ENCODE measurements at regions of chr9 and their contacts with region 1.

Region 1: DNA sequence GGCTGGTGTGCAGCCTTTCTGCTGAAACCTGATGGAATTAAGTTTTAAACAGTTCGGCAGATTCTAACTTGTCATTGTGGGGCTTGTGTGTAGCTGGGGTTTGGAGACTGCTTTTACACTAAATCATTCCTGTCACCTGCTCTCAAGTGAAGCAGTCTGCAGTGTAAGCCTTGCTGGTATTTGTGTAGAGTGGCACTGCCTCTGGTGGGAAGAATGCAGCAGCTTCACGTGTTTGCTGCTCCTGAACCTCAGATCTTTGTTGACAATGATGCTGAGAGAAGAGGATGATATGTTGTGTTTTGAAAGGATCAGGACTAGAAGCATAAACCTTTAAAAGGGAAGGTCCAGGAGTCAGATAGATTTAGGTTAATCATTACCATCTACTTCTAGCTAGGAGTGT is 88.1 kb downstream of the KDM4C start:
- DNase-seq: no peak
- ATAC-seq: peak in 6 of 8 donors; percentile 50 to 74 (median 61)
- H3K4me3 ChIP-seq: no peak overlapping the region
- H3K27ac ChIP-seq: no peak overlapping the region
- H3K4me1 ChIP-seq: peaks cover 0 to 7% (median 0%) of the 10 kb centered on the region in 9 donors
- H3K27me3 ChIP-seq: no peaks in the 10 kb centered on the region
- CTCF ChIP-seq: peak in 7 of 9 donors; percentile 28 to 60 (median 41)

Region 2: DNA sequence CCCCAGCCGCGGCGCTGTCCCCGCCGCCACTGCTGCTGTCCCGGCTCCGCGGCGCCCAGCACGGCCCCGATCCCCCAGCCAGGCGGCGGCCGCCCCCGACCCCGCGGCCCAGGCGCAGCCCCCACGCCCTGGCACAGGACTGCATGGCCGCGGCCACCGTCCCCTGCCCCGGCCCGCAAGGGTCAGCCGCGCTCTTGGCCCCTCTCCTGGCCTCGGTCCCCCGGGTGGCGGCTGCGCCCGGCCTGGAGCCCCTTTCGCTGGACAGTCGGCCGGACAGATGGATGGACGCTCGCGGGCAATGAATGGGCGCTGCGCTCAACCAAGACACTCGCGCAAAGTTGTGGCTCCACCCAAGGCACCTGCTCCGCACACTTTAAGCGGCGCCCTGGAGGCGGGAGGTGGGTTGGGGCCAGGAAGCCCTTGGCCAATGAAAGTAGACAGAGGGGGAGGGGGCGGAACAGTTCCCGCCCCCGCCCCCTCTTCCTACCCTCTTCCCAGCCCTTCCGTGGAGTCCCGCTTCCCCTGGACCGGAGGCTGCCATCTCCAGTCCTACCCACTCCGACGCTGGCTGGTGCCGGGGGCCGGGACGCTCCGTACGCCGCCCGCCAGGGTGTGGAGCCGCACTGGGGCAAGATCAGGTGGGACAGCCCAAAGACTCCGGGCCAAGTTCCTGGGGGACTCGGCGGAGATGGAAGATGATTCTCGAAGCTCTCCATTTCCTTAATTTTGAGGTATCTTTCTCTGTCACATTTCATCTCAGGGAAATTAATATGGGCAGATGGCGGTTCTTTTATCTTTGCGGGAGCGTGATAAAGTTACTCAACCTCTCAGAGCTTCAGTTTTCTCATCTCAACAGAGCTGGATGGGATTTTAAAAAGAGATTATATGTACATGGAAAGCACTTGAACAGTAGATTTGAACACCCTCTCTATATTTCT is 200.3 kb before region 1 on chr9 and contains the start of gene GLDC:
- intact Hi-C with region 1: no loop called
- DNase-seq: peak; percentile 12 to 29
- ATAC-seq: peak; percentile 51 to 89 (median 70)
- H3K4me3 ChIP-seq: peak within 1 kb of the TSS; percentile 18 to 55 (median 46)
- H3K27ac ChIP-seq: no peak within 1 kb of the TSS
- H3K4me1 ChIP-seq: peaks cover 4 to 17% (median 16%) of the 10 kb centered on the region in 9 donors
- H3K27me3 ChIP-seq: peaks cover 5 to 84% (median 72%) of the 10 kb centered on the region in 7 donors
- CTCF ChIP-seq: no peak
- total RNA-seq, gene GLDC: not detected

Region 3: DNA sequence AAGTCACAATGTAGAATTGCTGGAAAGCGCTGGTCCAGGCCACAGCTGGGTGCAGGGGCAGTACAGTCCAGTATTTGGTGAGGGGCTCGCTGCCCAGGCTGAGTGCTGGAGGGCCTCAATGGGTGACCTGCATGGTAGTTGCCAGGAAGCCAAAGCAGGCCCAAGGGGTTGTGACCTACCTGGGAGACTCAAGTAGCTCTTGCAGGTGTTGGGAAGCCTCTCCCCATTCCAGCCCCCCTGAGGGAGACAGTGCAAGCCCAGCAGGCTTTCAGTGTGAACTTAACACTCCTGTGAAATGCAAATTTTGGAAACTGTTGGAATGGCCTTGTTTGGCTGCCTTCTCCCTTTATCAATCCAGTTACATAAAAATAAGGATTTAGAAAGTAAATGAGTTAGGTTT is 74.2 kb before region 1 on chr9:
- intact Hi-C with region 1: no loop called
- DNase-seq: no peak
- ATAC-seq: peak in 1 of 8 donors; percentile 14
- H3K4me3 ChIP-seq: no peak overlapping the region
- H3K27ac ChIP-seq: no peak overlapping the region
- H3K4me1 ChIP-seq: peaks cover 0 to 12% (median 0%) of the 10 kb centered on the region in 9 donors
- H3K27me3 ChIP-seq: no peaks in the 10 kb centered on the region
- CTCF ChIP-seq: no peak

Region 4: GRCh38 chr9:6788162-6789016 is 57.5 kb before region 1 on chr9:
- intact Hi-C with region 1: loop called in 1 of 10 experiments (anchors 10 kb)
- DNase-seq: no peak
- ATAC-seq: peak in 6 of 8 donors; percentile 46 to 70 (median 62)
- H3K4me3 ChIP-seq: no peak overlapping the region
- H3K27ac ChIP-seq: peak overlapping the region in 2 of 10 donors; percentile 4 to 25
- H3K4me1 ChIP-seq: peaks cover 2 to 36% (median 17%) of the 10 kb centered on the region in 9 donors
- H3K27me3 ChIP-seq: no peaks in the 10 kb centered on the region
- CTCF ChIP-seq: no peak

Measured in heart right ventricle (tissue), 16 donors.